ENCODE measurements at regions of chr11 and their contacts with region 1.

Region 1: DNA sequence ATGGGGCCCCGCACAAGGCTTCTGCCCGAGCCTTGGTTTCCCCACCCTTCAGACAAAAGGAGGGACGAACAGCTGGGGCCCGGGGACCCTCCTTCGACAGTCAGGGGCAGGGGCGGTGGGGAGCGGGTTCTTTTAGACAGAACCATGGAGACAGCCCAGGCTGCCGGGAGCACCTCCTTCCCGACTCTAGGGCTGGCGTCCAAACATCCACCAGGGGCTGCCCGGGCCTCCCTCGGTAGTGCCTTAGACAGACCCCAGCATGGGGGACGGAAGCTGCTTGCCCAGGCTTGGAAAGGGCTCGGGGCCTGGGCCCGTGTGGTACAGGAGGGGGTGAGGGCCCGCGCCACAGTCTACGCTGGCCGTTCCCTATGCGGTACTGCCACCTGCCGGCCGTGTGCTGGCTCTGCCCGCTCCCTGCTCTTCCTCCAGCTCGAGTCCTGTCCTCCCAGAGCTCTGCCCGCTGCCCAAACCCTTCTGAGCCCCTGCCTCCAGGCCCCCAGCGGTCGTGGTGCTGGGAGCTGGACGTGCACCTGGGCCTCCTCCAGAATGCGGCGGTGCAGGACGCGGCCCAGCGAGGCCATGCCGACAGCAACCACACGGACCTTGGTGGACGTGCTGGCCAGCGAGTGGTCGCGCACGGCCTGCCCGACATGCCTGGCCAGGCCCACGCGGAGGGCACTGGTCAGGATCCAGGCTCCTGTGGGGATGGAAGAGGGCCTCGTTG is 20.1 kb downstream of the TSSC4 start:
- DNase-seq: peak; percentile 80
- H3K4me3 Mint-ChIP-seq: no peak overlapping the region
- H3K27ac Mint-ChIP-seq: no peak overlapping the region
- H3K4me1 Mint-ChIP-seq: peaks cover 3% of the 10 kb centered on the region
- H3K27me3 Mint-ChIP-seq: no peaks in the 10 kb centered on the region

Region 2: GRCh38 chr11:2163428-2163978 is 257.2 kb before region 1 on chr11:
- CTCF ChIA-PET with region 1: interaction called, 10 read pairs
- DNase-seq: no peak
- H3K4me3 Mint-ChIP-seq: no peak overlapping the region
- H3K27ac Mint-ChIP-seq: no peak overlapping the region
- H3K4me1 Mint-ChIP-seq: no peaks in the 10 kb centered on the region
- H3K27me3 Mint-ChIP-seq: peaks cover 10% of the 10 kb centered on the region

Region 3: GRCh38 chr11:2196970-2197770 is 223.5 kb before region 1 on chr11:
- CTCF ChIA-PET with region 1: interaction called, 41 read pairs
- DNase-seq: peak; percentile 83
- H3K4me3 Mint-ChIP-seq: no peak overlapping the region
- H3K27ac Mint-ChIP-seq: no peak overlapping the region
- H3K4me1 Mint-ChIP-seq: no peaks in the 10 kb centered on the region
- H3K27me3 Mint-ChIP-seq: peaks cover 18% of the 10 kb centered on the region

Region 4: DNA sequence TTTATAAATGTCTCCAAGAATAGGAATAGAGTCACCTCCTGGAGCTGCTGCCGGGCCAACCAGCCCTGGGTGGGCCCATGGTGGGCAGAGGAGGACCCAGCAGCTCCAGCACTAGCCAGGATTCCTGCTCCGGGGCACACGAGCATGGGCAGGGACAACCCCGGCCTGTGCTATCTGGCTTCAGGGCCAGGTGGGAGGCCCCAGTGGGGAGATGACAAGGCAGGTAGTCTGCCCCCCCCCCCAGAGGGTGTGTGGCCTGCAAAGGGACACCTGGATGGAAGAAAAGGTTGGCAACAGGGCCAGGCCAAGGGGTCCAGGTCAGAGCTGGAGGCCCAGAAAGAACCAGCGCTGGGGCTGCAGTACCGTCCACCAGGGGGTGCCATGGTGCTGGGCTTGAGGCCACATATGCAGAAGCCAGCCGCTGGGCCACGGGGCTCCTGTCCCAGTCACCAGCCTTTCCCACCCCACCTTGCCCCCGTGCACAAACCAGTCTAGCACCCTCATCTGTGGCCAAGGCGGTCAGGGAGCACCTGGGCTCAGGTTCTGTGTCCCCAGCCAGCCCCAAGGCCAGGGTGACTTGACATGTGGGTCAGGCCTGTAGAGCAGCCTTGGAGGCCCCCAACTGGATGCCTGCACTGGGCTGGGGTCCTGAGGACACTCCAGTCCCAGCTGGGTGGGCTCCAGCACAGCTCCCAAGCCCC is 115.4 kb before region 1 on chr11:
- CTCF ChIA-PET with region 1: interaction called, 279 read pairs
- DNase-seq: peak; percentile 90
- H3K4me3 Mint-ChIP-seq: peak overlapping the region; percentile 68
- H3K27ac Mint-ChIP-seq: peak overlapping the region; percentile 85
- H3K4me1 Mint-ChIP-seq: peaks cover 52% of the 10 kb centered on the region
- H3K27me3 Mint-ChIP-seq: no peaks in the 10 kb centered on the region

Region 5: GRCh38 chr11:2376751-2377451 is 43.8 kb before region 1 on chr11 and contains the start of gene CD81:
- CTCF ChIA-PET with region 1: no interaction called
- DNase-seq: peak; percentile 65
- H3K4me3 Mint-ChIP-seq: peak within 1 kb of the TSS; percentile 80
- H3K27ac Mint-ChIP-seq: peak within 1 kb of the TSS; percentile 85
- H3K4me1 Mint-ChIP-seq: peaks cover 24% of the 10 kb centered on the region
- H3K27me3 Mint-ChIP-seq: peaks cover 21% of the 10 kb centered on the region

Region 6: DNA sequence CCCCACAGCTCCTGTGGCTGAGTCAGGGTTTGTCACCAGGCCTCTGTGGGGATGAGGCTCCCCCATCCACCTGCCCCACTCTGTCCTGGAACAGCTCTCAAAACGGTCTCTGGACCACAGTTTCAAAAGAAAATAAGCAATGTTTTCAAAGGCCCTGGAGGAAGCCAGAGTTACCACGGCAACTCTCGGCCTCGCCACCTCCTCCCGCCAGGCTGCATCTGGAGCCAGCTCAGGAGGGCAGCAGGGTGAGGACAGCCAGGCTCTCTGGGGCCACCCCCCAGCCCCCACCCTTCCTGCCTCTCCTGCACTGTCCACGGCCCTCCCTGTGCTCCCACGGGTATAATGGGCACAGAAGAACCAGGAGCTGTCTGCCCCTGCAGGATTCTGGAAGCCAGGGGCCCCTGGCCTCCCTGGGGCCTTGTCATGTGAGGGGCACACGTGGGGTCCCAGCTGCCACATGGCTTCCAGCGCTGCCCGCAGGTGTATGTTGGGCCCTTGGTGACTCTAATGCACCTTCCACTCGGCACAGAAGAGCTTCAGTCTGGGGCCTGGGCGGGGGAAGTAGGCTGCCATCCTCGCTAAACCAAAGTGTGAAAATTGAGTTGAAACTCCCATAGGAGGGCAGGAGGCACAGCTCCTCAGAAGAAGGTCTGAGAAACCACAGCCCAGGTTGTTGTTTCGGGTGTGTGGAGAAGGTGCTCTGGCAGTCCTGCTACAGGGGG is 33.2 kb before region 1 on chr11:
- CTCF ChIA-PET with region 1: interaction called, 11 read pairs
- DNase-seq: peak; percentile 40
- H3K4me3 Mint-ChIP-seq: no peak overlapping the region
- H3K27ac Mint-ChIP-seq: peak overlapping the region; percentile 49
- H3K4me1 Mint-ChIP-seq: peaks cover 56% of the 10 kb centered on the region
- H3K27me3 Mint-ChIP-seq: no peaks in the 10 kb centered on the region

Region 7: GRCh38 chr11:2675540-2675939 is 254.9 kb after region 1 on chr11:
- CTCF ChIA-PET with region 1: no interaction called
- DNase-seq: no peak
- H3K4me3 Mint-ChIP-seq: no peak overlapping the region
- H3K27ac Mint-ChIP-seq: no peak overlapping the region
- H3K4me1 Mint-ChIP-seq: no peaks in the 10 kb centered on the region
- H3K27me3 Mint-ChIP-seq: no peaks in the 10 kb centered on the region

Measured in activated naive CD4-positive, alpha-beta T cell treated with anti-CD3 and anti-CD28 coated beads, Interleukin-2, amount 10 ng/mL, durations not matched to agents 7 days and 5 days (primary cell).